CD4-positive, alpha-beta memory T cell (primary cell): ENCODE measurements at regions of chr7 and their contacts with region 1.

Region 1: GRCh38 chr7:141737834-141738591 is at the start of gene SSBP1:
- DNase-seq: peak; percentile 93 to 95 (median 93)
- H3K4me3 ChIP-seq: peak within 1 kb of the TSS; percentile 94 to 95
- H3K4me3 Mint-ChIP-seq: peak within 1 kb of the TSS; percentile 98 to 100 (median 99)
- H3K27ac ChIP-seq: peak within 1 kb of the TSS; percentile 85
- H3K27ac Mint-ChIP-seq: peak within 1 kb of the TSS; percentile 96 to 99 (median 99)
- H3K4me1 ChIP-seq: peaks cover 36% of the 10 kb centered on the region
- H3K4me1 Mint-ChIP-seq: peaks cover 26 to 60% (median 38%) of the 10 kb centered on the region in 4 donors
- H3K27me3 ChIP-seq: no peaks in the 10 kb centered on the region
- H3K27me3 Mint-ChIP-seq: no peaks in the 10 kb centered on the region
- total RNA-seq, gene SSBP1: 88.2 to 91.2 TPM

Region 2: GRCh38 chr7:140696680-140697446 is 1041.2 kb before region 1 on chr7 and contains the start of gene NDUFB2:
- CTCF ChIA-PET with region 1: no interaction called
- POLR2A ChIA-PET with region 1: interaction called, 3 read pairs
- intact Hi-C with region 1: loop called (anchors 10 kb)
- DNase-seq: peak; percentile 84 to 90 (median 90)
- H3K4me3 ChIP-seq: peak within 1 kb of the TSS; percentile 66 to 92
- H3K4me3 Mint-ChIP-seq: peak within 1 kb of the TSS; percentile 93 to 98 (median 97)
- H3K27ac ChIP-seq: peak within 1 kb of the TSS; percentile 89
- H3K27ac Mint-ChIP-seq: peak within 1 kb of the TSS; percentile 96 to 100 (median 98)
- H3K4me1 ChIP-seq: peaks cover 32% of the 10 kb centered on the region
- H3K4me1 Mint-ChIP-seq: peaks cover 18 to 48% (median 33%) of the 10 kb centered on the region in 4 donors
- H3K27me3 ChIP-seq: no peaks in the 10 kb centered on the region
- H3K27me3 Mint-ChIP-seq: no peaks in the 10 kb centered on the region
- total RNA-seq, gene NDUFB2: 94.4 to 98.6 TPM

Region 3: GRCh38 chr7:141551094-141551781 is 186.8 kb before region 1 on chr7 and contains the start of gene AGK:
- CTCF ChIA-PET with region 1: interaction called, 4 read pairs
- POLR2A ChIA-PET with region 1: interaction called, 17 read pairs
- intact Hi-C with region 1: loop called (anchors 1 kb)
- DNase-seq: peak; percentile 72 to 80 (median 75)
- H3K4me3 ChIP-seq: peak within 1 kb of the TSS; percentile 32 to 70
- H3K4me3 Mint-ChIP-seq: peak within 1 kb of the TSS; percentile 78 to 96 (median 93)
- H3K27ac ChIP-seq: peak within 1 kb of the TSS; percentile 56
- H3K27ac Mint-ChIP-seq: peak within 1 kb of the TSS; percentile 50 to 96 (median 91)
- H3K4me1 ChIP-seq: peaks cover 28% of the 10 kb centered on the region
- H3K4me1 Mint-ChIP-seq: peaks cover 20 to 40% (median 34%) of the 10 kb centered on the region in 4 donors
- H3K27me3 ChIP-seq: no peaks in the 10 kb centered on the region
- H3K27me3 Mint-ChIP-seq: peaks cover 0 to 2% of the 10 kb centered on the region in 2 donors
- total RNA-seq, gene AGK: 28.1 to 30.0 TPM

Region 4: GRCh38 chr7:141663081-141663849 is 74.7 kb before region 1 on chr7:
- CTCF ChIA-PET with region 1: interaction called, 18 read pairs
- POLR2A ChIA-PET with region 1: interaction called, 4 read pairs
- intact Hi-C with region 1: no loop called
- DNase-seq: no peak
- H3K4me3 ChIP-seq: no peak overlapping the region
- H3K4me3 Mint-ChIP-seq: no peak overlapping the region
- H3K27ac ChIP-seq: no peak overlapping the region
- H3K27ac Mint-ChIP-seq: peak overlapping the region; percentile 43 to 86 (median 64)
- H3K4me1 ChIP-seq: peaks cover 4% of the 10 kb centered on the region
- H3K4me1 Mint-ChIP-seq: peaks cover 1 to 11% (median 6%) of the 10 kb centered on the region in 4 donors
- H3K27me3 ChIP-seq: no peaks in the 10 kb centered on the region
- H3K27me3 Mint-ChIP-seq: no peaks in the 10 kb centered on the region

Region 5: GRCh38 chr7:141722529-141722928 is 15.5 kb before region 1 on chr7:
- CTCF ChIA-PET with region 1: interaction called, 15 read pairs
- POLR2A ChIA-PET with region 1: interaction called, 13 read pairs
- intact Hi-C with region 1: no loop called
- DNase-seq: no peak
- H3K4me3 ChIP-seq: no peak overlapping the region
- H3K4me3 Mint-ChIP-seq: no peak overlapping the region
- H3K27ac ChIP-seq: no peak overlapping the region
- H3K27ac Mint-ChIP-seq: no peak overlapping the region
- H3K4me1 ChIP-seq: no peaks in the 10 kb centered on the region
- H3K4me1 Mint-ChIP-seq: no peaks in the 10 kb centered on the region
- H3K27me3 ChIP-seq: no peaks in the 10 kb centered on the region
- H3K27me3 Mint-ChIP-seq: no peaks in the 10 kb centered on the region